ENCODE measurements at regions of chr20 and their contacts with region 1.

Region 1: GRCh38 chr20:59455402-59456341 is 148.7 kb upstream of the PHACTR3 start:
- DNase-seq: no peak
- H3K4me3 ChIP-seq: peak overlapping the region in 1 of 2 donors; percentile 20
- H3K27ac ChIP-seq: no peak overlapping the region
- H3K4me1 ChIP-seq: no peaks in the 10 kb centered on the region
- H3K27me3 ChIP-seq: no peaks in the 10 kb centered on the region
- CTCF ChIP-seq: peak; percentile 23 to 56 (median 29)

Region 2: GRCh38 chr20:58870239-58871014 is 585.2 kb before region 1 on chr20:
- intact Hi-C with region 1: loop called (anchors 5 kb)
- DNase-seq: peak in 1 of 2 donors; percentile 84
- H3K4me3 ChIP-seq: no peak overlapping the region
- H3K27ac ChIP-seq: no peak overlapping the region
- H3K4me1 ChIP-seq: no peaks in the 10 kb centered on the region
- H3K27me3 ChIP-seq: no peaks in the 10 kb centered on the region
- CTCF ChIP-seq: peak; percentile 85 to 91 (median 88)

Measured in ascending aorta (tissue), 2 donors.